Motor neuron (in vitro differentiated cells): ENCODE measurements at regions of chr5 and their contacts with region 1.

Region 1: DNA sequence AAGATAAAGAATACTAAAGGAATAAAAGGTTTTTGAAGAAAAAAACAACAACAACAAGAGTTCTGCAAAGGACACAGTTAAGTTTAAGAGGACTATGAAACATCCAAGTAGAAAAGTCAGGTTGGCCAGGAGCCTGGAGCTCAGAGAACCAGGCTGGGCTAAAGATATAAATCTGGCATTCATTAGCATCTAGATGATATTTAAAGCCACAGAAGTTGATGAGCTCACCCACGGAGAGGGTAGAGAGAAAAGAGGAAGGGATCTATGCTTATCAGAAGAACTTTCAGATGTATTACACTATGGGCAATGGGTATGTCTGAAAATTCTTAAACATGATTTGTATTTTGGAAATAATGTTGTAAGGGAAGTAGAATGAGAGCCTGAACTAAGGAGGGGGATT is 9.9 kb downstream of the MIER3 start:
- ATAC-seq: peak in 3 of 8 experiments; percentile 72 to 96 (median 89)
- H3K4me3 ChIP-seq: no peak overlapping the region
- H3K27ac ChIP-seq: no peak overlapping the region
- H3K4me1 ChIP-seq: no peaks in the 10 kb centered on the region

Region 2: DNA sequence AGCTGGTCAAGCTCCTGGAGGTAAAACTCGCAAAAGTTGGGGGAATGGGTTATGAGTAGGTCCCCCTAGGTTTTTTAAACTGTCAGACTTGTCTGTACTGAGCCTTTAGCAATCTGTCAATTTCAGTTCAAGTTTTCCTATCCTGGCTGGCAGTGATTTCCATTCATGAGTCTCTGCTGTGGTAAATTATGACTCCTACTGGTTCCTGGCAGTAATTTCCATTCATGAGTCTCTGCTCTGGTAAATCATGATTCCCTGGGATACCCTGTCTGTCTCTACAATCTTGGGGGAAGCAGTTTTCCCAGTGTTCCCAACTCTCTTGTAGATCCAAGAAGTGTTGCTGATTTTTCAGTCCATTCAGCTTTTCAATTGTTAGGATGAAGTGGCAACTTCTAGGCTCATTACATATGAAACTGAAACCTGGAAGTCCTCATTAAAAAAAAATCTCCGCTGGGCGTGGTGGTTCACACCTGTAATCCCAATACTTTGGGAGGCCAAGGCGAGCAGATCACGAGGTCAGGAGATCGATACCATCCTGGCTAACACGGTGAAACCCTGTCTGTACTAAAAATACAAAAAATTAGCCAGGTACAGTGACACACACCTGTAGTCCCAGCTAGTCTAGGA is 140.6 kb after region 1 on chr5:
- in situ Hi-C with region 1: loop called in 1 of 9 experiments (anchors 25 kb)
- ATAC-seq: peak in 3 of 8 experiments; percentile 70 to 96 (median 86)
- H3K4me3 ChIP-seq: no peak overlapping the region
- H3K27ac ChIP-seq: no peak overlapping the region
- H3K4me1 ChIP-seq: no peaks in the 10 kb centered on the region